ENCODE measurements at regions of chr22 and their contacts with region 1.

Region 1: DNA sequence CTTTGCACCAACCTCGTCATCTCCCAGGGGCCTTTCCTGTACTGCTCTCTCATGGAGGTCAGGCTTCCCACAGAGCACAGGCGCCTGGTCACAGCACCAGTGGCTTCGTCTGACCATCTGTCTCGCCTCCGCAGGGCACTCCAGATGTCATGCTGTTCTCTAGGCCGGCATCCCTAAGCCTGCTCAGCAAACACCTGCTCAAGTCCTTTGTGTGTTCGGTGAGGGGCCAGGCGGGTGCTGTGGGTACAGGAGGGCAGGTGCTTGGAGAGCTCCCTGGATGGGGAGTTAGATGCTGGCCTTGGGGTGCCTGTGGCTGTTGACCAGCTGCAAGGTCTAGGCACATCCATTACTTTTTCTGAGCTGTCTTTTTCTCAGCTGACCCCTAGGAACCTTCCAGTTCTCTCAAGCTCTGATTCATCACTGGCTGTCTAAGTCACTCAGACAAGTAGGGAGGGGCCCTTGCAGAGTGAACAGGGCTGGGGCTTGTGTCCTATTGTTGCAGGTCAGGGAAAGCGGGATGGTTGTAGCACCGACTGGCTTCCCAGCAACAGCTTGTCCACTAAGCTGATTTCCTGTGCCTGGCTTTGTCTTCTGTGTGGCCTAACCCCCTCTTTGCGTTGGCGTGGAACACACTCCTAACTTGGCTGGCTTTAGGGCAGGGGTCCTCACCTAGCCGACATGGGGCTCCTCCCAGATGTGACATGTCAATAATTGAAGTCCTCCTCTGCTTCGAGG is 9.2 kb downstream of the CLDN5 start:
- DNase-seq: no peak
- H3K4me3 ChIP-seq: no peak overlapping the region
- H3K27ac ChIP-seq: no peak overlapping the region
- H3K4me1 ChIP-seq: no peaks in the 10 kb centered on the region
- H3K27me3 ChIP-seq: no peaks in the 10 kb centered on the region
- CTCF ChIP-seq: no peak
- POLR2A ChIP-seq: no peak

Region 2: DNA sequence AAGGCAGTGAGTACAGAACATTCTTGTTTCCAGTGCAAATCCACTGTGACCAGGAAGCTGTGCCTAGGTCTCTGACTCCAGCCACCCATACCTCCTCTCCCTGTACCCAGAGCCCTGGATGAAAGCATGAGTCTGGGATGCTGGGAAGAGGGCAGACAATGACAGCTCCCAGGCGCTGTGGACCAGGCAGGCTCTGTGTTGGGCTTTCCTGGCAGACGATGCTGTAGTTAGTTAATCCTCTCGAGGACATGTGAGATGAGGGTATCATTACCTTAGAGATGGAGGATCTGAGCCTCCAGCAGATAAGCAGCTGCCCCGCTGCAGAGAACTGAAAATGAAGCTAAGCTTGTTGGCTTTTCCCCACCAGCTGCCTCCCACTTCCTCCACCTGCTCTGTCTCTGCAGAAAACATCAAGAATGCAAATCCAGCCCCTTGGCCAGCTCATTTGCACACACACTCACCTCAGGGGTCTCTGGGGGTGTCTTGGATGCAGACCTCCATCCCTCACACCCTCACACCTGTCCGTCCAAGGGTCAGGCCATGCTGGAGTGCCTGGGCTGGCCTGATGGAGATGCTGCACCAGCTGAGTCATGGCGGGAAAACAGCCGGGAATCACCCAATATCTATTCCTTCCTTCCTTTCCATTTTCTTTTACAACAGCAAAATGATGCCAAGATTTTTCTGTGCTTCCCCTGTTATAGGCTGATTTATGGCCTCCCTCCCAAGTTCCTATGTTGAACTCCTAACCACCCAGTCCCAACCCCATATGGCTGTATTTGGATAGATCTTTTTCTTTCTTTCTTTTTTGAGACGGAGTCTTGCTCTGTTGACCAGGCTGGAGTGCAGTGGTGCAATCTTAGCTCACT is 104.4 kb after region 1 on chr22:
- intact Hi-C with region 1: loop called (anchors 10 kb)
- DNase-seq: no peak
- H3K4me3 ChIP-seq: no peak overlapping the region
- H3K27ac ChIP-seq: no peak overlapping the region
- H3K4me1 ChIP-seq: no peaks in the 10 kb centered on the region
- H3K27me3 ChIP-seq: peaks cover 0 to 35% (median 0%) of the 10 kb centered on the region in 4 donors
- CTCF ChIP-seq: no peak
- POLR2A ChIP-seq: no peak

Region 3: DNA sequence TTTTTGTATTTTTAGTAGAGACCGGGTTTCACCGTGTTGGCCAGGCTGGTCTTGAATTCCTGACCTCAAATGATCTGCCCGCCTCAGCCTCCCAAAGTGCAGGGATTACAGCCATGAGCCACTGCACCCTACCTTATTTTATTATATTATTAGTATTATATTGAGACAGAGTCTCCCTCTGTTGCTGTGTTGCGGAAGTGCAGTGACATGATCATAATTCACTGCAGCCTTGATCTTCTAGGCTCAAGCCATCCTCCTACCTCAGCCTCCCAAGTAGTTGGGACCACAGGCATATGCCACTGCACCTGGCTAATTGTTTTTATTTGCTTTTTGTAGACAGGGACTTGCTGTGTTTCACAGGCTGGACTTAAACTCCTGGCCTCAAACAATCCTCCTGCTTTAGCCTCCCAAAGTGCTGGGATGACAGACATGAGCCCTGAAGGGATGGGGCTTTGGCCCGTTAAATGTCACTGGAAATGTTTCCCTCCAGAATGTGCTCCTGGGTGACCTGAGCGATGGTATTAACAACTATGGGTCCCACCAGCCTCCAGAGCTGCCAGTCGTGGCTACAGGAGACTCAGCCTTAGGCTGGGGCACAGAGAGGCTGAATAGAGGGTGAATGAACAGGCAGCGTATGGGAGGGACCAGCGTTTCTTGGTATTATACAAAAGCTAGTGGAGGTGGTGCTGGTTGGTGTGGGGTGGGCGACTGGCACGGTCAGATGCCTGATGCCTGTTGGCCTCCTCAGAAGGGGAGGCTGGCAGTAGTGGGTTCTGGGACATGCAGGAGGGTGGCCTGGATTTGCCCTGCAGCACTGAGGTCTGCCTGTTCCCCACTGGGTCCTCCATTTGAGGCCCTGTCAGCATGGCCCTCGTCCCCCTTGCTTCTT is 513.2 kb after region 1 on chr22:
- intact Hi-C with region 1: no loop called
- DNase-seq: no peak
- H3K4me3 ChIP-seq: no peak overlapping the region
- H3K27ac ChIP-seq: no peak overlapping the region
- H3K4me1 ChIP-seq: peaks cover 5 to 42% (median 7%) of the 10 kb centered on the region in 3 donors
- H3K27me3 ChIP-seq: no peaks in the 10 kb centered on the region
- CTCF ChIP-seq: peak in 3 of 6 experiments; percentile 17 to 46 (median 44)
- POLR2A ChIP-seq: no peak